Dorsolateral prefrontal cortex (tissue), 120 donors: ENCODE measurements at regions of chr2 and their contacts with region 1.

Region 1: DNA sequence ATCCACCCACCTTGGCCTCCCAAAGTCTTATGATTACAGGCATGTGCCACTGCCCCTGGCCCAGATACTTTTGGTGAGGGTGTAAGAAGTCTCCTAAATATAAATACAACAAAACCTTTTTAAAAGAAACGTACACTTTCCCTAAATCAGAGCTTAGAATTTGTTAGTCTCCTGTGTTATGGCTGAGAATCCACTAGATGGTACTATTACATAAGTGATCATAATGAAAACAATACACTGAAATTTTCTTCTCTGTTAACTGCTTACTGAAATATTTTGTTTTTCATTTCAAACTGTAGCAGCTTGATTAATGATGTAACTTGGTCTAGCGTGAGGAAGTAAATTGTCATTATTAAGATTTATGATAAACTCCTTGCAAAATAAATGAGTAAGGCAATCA is 74.8 kb upstream of the FAM98A start:
- DNase-seq: no peak
- H3K4me3 ChIP-seq: no peak overlapping the region
- H3K27ac ChIP-seq: no peak overlapping the region
- H3K27me3 ChIP-seq: peaks cover 0 to 4% (median 0%) of the 10 kb centered on the region in 45 donors
- CTCF ChIP-seq: peak in 54 of 56 donors; percentile 36 to 80 (median 59)

Region 2: DNA sequence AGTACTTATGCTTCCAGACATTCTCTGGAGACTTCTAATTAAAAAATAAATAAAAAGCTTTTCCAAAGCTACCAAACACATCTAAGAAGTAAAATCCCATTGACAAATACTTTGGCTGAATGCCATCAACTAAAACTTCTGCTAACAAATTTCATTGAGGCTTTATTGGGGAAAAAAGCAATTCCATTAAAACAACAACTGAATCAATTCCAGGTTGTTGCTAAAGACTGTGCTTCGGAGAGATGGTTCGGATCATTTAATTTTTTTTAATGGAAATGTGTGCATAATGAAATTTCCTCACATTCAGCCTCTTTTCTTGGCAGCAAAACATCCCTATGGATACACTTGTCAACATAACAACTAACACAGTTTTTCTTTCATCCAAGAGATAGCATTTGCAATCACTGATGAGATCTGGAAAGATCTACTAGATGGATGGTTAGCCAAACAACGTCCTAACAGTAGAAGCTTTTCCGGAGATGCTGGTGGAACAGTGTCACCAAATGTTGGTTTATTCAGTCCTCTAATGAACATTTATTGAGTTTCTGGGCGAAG is 371.2 kb after region 1 on chr2:
- intact Hi-C with region 1: no loop called
- DNase-seq: no peak
- H3K4me3 ChIP-seq: no peak overlapping the region
- H3K27ac ChIP-seq: peak overlapping the region in 1 of 59 donors; percentile 27
- H3K27me3 ChIP-seq: no peaks in the 10 kb centered on the region
- CTCF ChIP-seq: no peak

Region 3: DNA sequence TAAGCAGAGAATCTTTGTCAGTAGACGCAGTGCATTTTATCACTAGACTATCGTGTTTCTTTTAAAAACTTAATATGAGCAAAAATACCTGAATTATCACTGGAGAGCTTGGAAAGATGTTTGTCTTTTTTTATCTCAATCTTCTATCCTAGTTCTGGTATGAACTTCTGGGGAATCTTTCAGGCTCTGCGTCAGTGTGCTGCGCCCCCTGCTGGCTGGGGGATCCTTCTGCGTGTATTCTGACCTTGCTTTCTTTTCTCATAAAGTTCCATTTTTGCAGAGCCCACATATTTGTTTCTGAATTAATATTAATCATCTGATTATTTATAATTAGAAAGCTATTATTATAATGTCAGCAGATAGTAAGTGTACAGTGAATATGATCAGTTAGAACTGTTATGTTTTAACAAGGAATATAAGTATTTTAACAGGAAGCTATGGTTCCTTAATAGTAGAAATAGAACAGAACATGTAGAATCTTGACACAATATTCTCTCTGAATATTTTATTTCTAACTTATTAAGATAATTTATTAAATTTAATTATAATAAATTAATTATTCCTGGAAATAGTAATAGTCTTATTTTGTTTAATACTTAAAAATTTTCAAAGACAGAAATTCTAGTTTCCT is 1736.6 kb after region 1 on chr2:
- intact Hi-C with region 1: loop called in 1 of 2 experiments (anchors 10 kb)
- DNase-seq: peak in 8 of 10 donors; percentile 48 to 77 (median 56)
- H3K4me3 ChIP-seq: no peak overlapping the region
- H3K27ac ChIP-seq: no peak overlapping the region
- H3K27me3 ChIP-seq: no peaks in the 10 kb centered on the region
- CTCF ChIP-seq: peak; percentile 74 to 98 (median 89)